Activated naive CD4-positive, alpha-beta T cell treated with anti-CD3 and anti-CD28 coated beads for 36 hours (primary cell): ENCODE measurements at regions of chr13 and their contacts with region 1.

Region 1: GRCh38 chr13:24500977-24501376 is 11.6 kb downstream of the PARP4 start:
- DNase-seq: no peak
- H3K4me3 Mint-ChIP-seq: no peak overlapping the region
- H3K27ac Mint-ChIP-seq: no peak overlapping the region
- H3K4me1 Mint-ChIP-seq: peaks cover 7% of the 10 kb centered on the region
- H3K27me3 Mint-ChIP-seq: no peaks in the 10 kb centered on the region

Region 2: GRCh38 chr13:24459234-24459633 is 41.7 kb before region 1 on chr13:
- CTCF ChIA-PET with region 1: no interaction called
- intact Hi-C with region 1: loop called (anchors 2 kb)
- DNase-seq: peak; percentile 44
- H3K4me3 Mint-ChIP-seq: no peak overlapping the region
- H3K27ac Mint-ChIP-seq: no peak overlapping the region
- H3K4me1 Mint-ChIP-seq: peaks cover 10% of the 10 kb centered on the region
- H3K27me3 Mint-ChIP-seq: no peaks in the 10 kb centered on the region